ENCODE measurements at regions of chr10 and their contacts with region 1.

Region 1: DNA sequence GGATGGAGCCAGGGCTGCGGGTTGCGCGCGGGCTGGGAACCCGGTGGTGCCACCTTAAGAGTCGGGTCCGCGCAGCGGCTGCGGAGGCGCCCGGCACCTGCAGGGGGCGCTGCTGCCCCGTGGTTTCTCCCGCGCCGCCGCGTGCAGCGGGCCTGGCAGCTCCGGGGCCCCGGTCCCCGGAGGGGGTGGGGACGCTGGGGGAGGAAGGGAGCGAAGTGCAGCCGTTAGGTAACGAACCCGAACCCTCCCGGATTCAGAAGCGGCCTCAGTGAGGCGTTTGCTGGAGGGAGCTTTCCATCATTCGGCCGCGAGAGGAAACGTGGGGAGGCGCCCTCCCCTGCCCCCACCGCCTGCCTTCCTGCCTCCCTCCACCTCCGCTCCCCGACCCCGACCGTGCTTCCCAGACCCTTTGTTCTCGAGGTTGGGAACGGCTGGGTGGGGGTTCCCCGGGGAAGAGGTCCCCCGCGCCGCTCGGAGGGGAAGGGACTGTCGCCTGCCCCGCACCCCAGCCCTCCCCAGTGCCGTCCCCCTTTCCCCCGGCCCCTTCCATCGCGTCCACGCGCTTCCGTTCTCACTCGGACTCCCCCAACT is 29.6 kb downstream of the SKIDA1 start:
- DNase-seq: peak; percentile 94
- ATAC-seq: peak; percentile 78 to 81
- H3K4me3 ChIP-seq: peak overlapping the region; percentile 77
- H3K27ac ChIP-seq: peak overlapping the region; percentile 93 to 99
- H3K4me1 ChIP-seq: peaks cover 37% of the 10 kb centered on the region
- CTCF ChIP-seq: peak; percentile 93
- EP300 ChIP-seq: peak in 1 of 2 experiments; percentile 48; a peak in 1 of 5 replicates
- POLR2A ChIP-seq: peak; percentile 53
- RAD21 ChIP-seq: peak; percentile 81 to 99

Region 2: DNA sequence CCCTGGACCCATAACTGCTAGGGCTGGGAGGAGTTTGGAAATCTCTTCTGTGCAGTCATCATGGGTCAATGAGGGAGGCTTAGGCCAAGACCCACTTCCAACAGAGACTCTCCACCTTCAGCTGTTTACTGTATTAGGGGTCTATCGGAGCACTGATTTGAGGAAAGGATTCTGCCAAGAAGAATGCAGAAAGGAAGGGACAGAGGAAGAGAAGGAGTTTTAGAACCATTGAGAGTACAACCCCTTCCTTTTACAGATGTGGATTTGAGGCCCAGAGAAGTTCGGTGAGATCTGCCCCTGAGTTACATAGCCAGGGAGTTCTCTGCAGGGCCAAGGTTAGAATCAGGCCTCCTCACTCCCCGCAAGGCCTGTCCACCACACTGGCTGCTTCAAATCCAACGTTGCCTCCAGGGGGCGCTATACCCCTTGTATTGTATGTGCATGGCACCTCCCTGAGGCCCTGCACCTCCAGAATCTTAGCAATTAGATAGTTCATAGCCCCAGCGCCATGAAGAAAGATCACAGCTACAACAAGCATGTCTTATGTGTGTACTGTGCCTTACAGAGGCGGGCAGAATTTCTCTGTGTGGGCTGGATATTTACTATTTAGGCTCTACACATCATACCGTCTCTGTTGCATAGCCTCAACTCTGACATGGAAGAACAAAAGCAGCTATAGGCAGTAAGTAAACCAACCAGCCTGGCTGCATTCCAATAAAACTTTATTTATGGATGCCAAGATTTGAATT is 217.2 kb before region 1 on chr10:
- CTCF ChIA-PET with region 1: interaction called, 97 read pairs
- POLR2A ChIA-PET with region 1: interaction called, 27 read pairs
- DNase-seq: peak; percentile 83 to 97
- ATAC-seq: peak; percentile 94 to 96
- H3K4me3 ChIP-seq: no peak overlapping the region
- H3K27ac ChIP-seq: peak overlapping the region; percentile 74 to 85
- H3K4me1 ChIP-seq: peaks cover 66% of the 10 kb centered on the region
- CTCF ChIP-seq: peak; percentile 88
- EP300 ChIP-seq: no peak
- POLR2A ChIP-seq: no peak
- RAD21 ChIP-seq: peak; percentile 97 to 98

Region 3: DNA sequence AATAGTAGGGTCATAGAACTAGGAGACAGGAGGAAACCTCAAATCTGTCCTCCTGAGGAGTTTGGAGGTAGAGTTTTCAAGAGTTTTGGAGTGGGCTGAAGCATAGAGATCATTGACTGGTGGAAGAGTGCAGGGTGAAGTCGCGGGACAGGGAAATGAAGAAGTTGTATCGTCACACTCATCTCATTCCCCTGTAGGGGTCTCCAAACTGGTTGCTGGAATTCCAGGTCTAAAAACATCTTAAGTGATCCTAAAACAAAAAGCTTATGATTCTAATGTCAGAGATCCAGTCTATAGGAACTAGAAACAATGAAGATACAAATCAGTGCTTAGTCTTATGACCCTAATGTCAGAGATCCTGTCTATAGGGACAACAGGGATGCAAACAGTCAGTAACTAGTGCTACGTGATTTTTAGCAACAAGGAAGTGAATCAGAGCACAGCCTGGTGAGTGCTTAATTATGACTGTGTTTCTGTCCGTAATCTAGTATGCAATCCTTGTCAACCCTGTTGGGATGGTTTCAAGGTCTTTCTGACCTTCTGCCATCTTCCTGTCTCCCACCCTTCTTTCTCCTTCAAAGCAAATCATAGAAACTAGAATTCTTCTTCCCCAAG is 109.7 kb before region 1 on chr10:
- CTCF ChIA-PET with region 1: no interaction called
- POLR2A ChIA-PET with region 1: interaction called, 11 read pairs
- DNase-seq: no peak
- ATAC-seq: no peak
- H3K4me3 ChIP-seq: no peak overlapping the region
- H3K27ac ChIP-seq: peak overlapping the region in 1 of 2 experiments; percentile 24; a peak in 1 of 6 replicates
- H3K4me1 ChIP-seq: no peaks in the 10 kb centered on the region
- CTCF ChIP-seq: no peak
- EP300 ChIP-seq: no peak
- POLR2A ChIP-seq: no peak
- RAD21 ChIP-seq: no peak

Region 4: GRCh38 chr10:21533467-21534279 is 37.8 kb after region 1 on chr10 and contains the start of gene MLLT10:
- CTCF ChIA-PET with region 1: interaction called, 37 read pairs
- POLR2A ChIA-PET with region 1: interaction called, 16 read pairs
- DNase-seq: peak; percentile 73 to 96
- ATAC-seq: peak; percentile 85 to 87
- H3K4me3 ChIP-seq: peak within 1 kb of the TSS; percentile 92
- H3K27ac ChIP-seq: peak within 1 kb of the TSS; percentile 94 to 99
- H3K4me1 ChIP-seq: peaks cover 38% of the 10 kb centered on the region
- CTCF ChIP-seq: no peak
- EP300 ChIP-seq: no peak
- POLR2A ChIP-seq: peak; percentile 66
- RAD21 ChIP-seq: no peak; a peak in 3 of 5 replicates
- polyA plus RNA-seq, gene MLLT10: 54.1 and 55.5 TPM in 2 replicates

Region 5: GRCh38 chr10:21732067-21732772 is 236.4 kb after region 1 on chr10:
- CTCF ChIA-PET with region 1: interaction called, 63 read pairs
- POLR2A ChIA-PET with region 1: interaction called, 7 read pairs
- DNase-seq: peak; percentile 74 to 87
- ATAC-seq: peak; percentile 95
- H3K4me3 ChIP-seq: no peak overlapping the region
- H3K27ac ChIP-seq: 0 out of 6 replicates have a peak overlapping the region, but pooled peaks of 1 of the 2 experiments have one; percentile 6
- H3K4me1 ChIP-seq: peaks cover 37% of the 10 kb centered on the region
- CTCF ChIP-seq: peak; percentile 86
- EP300 ChIP-seq: no peak
- POLR2A ChIP-seq: no peak
- RAD21 ChIP-seq: peak; percentile 92 to 93